ENCODE measurements at regions of chr4 and their contacts with region 1.

Region 1: GRCh38 chr4:37441276-37441994 is 196.9 kb downstream of the NWD2 start:
- DNase-seq: peak; percentile 84
- ATAC-seq: peak; percentile 91
- H3K4me3 ChIP-seq: peak overlapping the region in 1 of 2 experiments; percentile 4; a peak in 1 of 4 replicates
- H3K27ac ChIP-seq: no peak overlapping the region
- H3K4me1 ChIP-seq: peaks cover 10 to 22% of the 10 kb centered on the region in 2 experiments
- H3K27me3 ChIP-seq: no peaks in the 10 kb centered on the region
- CTCF ChIP-seq: no peak
- POLR2A ChIP-seq: no peak
- RAD21 ChIP-seq: no peak

Region 2: GRCh38 chr4:37324546-37324945 is 116.9 kb before region 1 on chr4:
- CTCF ChIA-PET with region 1: no interaction called
- POLR2A ChIA-PET with region 1: no interaction called
- RAD21 ChIA-PET with region 1: no interaction called
- intact Hi-C with region 1: no loop called
- DNase-seq: no peak
- ATAC-seq: no peak
- H3K4me3 ChIP-seq: no peak overlapping the region
- H3K27ac ChIP-seq: no peak overlapping the region
- H3K4me1 ChIP-seq: peaks cover 5 to 18% of the 10 kb centered on the region in 2 experiments; a peak in 2 of 4 replicates
- H3K27me3 ChIP-seq: no peaks in the 10 kb centered on the region
- CTCF ChIP-seq: no peak
- POLR2A ChIP-seq: no peak
- RAD21 ChIP-seq: no peak

Region 3: DNA sequence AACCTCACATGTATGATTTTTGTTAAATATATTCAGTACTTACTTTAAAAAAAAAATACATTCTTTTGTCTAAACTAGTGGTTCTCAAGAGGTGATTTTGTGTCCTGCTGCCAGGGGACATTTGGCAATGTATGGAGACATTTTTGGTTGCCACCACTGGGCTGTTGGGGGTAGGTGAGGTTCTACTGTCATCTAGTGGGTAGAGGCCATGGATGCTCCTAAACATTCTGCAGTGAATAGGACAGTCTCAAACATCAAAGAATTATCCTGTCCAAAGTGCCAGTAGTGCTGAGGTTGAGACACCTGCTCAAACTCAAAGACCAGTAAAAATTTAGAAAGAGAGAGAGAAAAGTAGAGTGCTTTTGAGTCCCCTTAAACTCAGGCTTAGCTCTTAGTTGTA is 352.1 kb after region 1 on chr4:
- CTCF ChIA-PET with region 1: no interaction called
- POLR2A ChIA-PET with region 1: no interaction called
- RAD21 ChIA-PET with region 1: no interaction called
- intact Hi-C with region 1: loop called (anchors 5 kb)
- DNase-seq: no peak
- ATAC-seq: peak; percentile 80
- H3K4me3 ChIP-seq: no peak overlapping the region
- H3K27ac ChIP-seq: no peak overlapping the region
- H3K4me1 ChIP-seq: no peaks in the 10 kb centered on the region
- H3K27me3 ChIP-seq: no peaks in the 10 kb centered on the region
- CTCF ChIP-seq: peak; percentile 55 to 65 (median 58); a peak in 5 of 6 replicates
- POLR2A ChIP-seq: no peak
- RAD21 ChIP-seq: peak; percentile 85

Region 4: DNA sequence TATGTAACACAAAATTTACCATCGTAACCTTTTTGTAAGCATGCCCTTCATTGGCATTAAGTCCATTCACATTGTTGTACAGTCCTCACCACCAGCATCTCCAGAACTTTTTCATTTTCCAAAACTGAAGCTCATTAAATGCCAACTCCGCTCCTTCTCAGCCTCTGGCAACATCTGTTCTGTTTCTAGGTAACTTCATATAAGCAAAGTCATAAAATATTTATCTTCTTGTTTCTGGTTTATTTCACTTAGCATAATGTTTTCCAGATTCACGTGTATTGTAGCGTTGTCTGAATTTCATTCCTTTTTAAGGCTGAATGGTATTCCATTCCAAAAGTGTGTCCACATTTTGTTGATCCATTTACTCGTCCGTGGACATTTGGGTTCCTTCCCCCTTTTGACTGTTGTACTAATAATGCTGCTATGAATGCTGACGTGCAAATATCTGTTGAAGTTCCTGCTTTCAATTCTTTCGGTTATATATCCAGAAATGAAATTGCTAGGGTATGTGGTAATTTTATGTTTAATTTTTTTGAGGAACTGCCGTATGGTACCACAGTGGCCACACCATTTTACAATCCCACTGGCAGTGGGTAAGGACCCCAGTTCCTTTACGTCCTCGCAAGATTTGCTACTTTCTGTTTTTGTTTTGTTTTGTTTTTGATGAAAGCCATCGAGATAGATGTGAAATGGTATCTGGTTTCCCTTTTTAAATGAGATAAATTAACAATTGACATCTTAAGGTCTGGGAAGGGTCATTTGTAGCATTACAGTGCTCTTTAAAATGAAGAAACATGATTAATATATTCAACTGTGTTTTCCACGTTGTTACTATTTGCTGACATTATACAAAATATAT is 582.1 kb after region 1 on chr4:
- CTCF ChIA-PET with region 1: no interaction called
- POLR2A ChIA-PET with region 1: no interaction called
- RAD21 ChIA-PET with region 1: no interaction called
- intact Hi-C with region 1: no loop called
- DNase-seq: no peak
- ATAC-seq: no peak
- H3K4me3 ChIP-seq: no peak overlapping the region
- H3K27ac ChIP-seq: no peak overlapping the region
- H3K4me1 ChIP-seq: no peaks in the 10 kb centered on the region
- H3K27me3 ChIP-seq: no peaks in the 10 kb centered on the region
- CTCF ChIP-seq: no peak
- POLR2A ChIP-seq: no peak
- RAD21 ChIP-seq: no peak